Naive thymus-derived CD4-positive, alpha-beta T cell (primary cell): ENCODE measurements at regions of chr20 and their contacts with region 1.

Region 1: GRCh38 chr20:59207742-59208357 is 44.2 kb downstream of the ZNF831 start:
- DNase-seq: peak; percentile 62 to 82 (median 78)
- ATAC-seq: peak; percentile 98
- H3K4me3 ChIP-seq: no peak overlapping the region
- H3K4me3 Mint-ChIP-seq: peak overlapping the region in 3 of 10 donors; percentile 8 to 35 (median 12)
- H3K27ac ChIP-seq: no peak overlapping the region
- H3K27ac Mint-ChIP-seq: peak overlapping the region in 8 of 9 donors; percentile 63 to 93 (median 84)
- H3K4me1 ChIP-seq: peaks cover 7 to 18% of the 10 kb centered on the region in 2 donors
- H3K4me1 Mint-ChIP-seq: peaks cover 13 to 47% (median 42%) of the 10 kb centered on the region in 7 donors
- H3K27me3 ChIP-seq: no peaks in the 10 kb centered on the region
- H3K27me3 Mint-ChIP-seq: no peaks in the 10 kb centered on the region

Region 2: DNA sequence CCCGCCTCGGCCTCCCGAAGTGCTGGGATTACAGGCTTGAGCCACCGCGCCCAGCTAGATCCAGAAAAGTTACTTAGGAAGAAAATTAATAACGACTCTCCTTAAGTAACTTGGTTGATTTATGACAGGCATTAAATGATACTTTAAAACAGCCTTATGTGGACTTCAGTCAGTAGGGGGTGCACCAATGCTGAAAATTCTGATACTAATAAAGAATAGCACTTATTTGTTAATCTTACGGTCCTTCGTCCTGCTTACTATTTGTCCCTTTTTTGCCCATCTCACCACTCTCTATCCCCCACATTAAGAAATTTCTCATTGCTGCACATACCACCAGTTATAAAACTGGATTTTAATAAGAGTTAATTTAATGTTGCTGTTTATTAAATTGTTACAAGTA is 152.6 kb before region 1 on chr20:
- CTCF ChIA-PET with region 1: interaction called, 5 read pairs
- POLR2A ChIA-PET with region 1: no interaction called
- intact Hi-C with region 1: loop called in 1 of 2 experiments (anchors 1 kb)
- DNase-seq: peak in 4 of 9 donors; percentile 5 to 25 (median 14)
- ATAC-seq: no peak
- H3K4me3 ChIP-seq: no peak overlapping the region
- H3K4me3 Mint-ChIP-seq: no peak overlapping the region
- H3K27ac ChIP-seq: no peak overlapping the region
- H3K27ac Mint-ChIP-seq: no peak overlapping the region
- H3K4me1 ChIP-seq: no peaks in the 10 kb centered on the region
- H3K4me1 Mint-ChIP-seq: no peaks in the 10 kb centered on the region
- H3K27me3 ChIP-seq: peaks cover 4 to 5% of the 10 kb centered on the region in 2 donors
- H3K27me3 Mint-ChIP-seq: peaks cover 10 to 59% (median 15%) of the 10 kb centered on the region in 5 donors

Region 3: DNA sequence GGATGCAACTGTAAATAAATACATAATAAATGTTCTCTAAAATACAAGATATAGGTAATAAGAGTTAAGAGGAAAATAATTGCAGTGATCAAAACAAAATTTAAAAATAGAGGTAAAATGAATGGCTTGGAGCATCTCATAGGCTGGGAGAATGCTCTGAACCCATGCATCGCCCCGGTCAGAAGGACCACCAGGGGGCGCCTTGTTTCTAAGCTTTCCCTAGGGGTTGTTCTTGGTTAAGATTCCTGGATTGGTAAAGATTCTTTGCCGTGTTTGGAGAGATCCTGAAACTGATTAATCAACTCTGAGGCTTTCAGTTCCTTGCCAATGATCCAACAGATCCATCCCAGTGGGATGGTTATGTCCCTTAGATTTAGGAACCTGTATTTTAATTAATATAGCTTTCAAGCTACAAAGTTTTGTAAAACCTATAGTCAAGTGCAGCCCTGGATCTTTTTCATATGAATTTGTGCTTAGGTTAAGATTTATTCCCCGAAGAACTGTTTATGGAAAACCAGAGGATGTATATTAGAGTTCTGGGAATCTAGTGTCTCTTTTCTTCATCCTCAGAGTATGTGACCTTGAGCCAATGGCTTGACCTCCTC is 119.9 kb before region 1 on chr20:
- CTCF ChIA-PET with region 1: interaction called, 97 read pairs
- POLR2A ChIA-PET with region 1: interaction called, 13 read pairs
- intact Hi-C with region 1: loop called (anchors 1 kb)
- DNase-seq: peak; percentile 67 to 85 (median 78)
- ATAC-seq: peak; percentile 92
- H3K4me3 ChIP-seq: no peak overlapping the region
- H3K4me3 Mint-ChIP-seq: no peak overlapping the region
- H3K27ac ChIP-seq: no peak overlapping the region
- H3K27ac Mint-ChIP-seq: peak overlapping the region in 4 of 9 donors; percentile 10 to 58 (median 40)
- H3K4me1 ChIP-seq: peaks cover 0 to 5% of the 10 kb centered on the region in 2 donors
- H3K4me1 Mint-ChIP-seq: peaks cover 0 to 7% (median 5%) of the 10 kb centered on the region in 7 donors
- H3K27me3 ChIP-seq: no peaks in the 10 kb centered on the region
- H3K27me3 Mint-ChIP-seq: peaks cover 0 to 32% (median 0%) of the 10 kb centered on the region in 5 donors

Region 4: DNA sequence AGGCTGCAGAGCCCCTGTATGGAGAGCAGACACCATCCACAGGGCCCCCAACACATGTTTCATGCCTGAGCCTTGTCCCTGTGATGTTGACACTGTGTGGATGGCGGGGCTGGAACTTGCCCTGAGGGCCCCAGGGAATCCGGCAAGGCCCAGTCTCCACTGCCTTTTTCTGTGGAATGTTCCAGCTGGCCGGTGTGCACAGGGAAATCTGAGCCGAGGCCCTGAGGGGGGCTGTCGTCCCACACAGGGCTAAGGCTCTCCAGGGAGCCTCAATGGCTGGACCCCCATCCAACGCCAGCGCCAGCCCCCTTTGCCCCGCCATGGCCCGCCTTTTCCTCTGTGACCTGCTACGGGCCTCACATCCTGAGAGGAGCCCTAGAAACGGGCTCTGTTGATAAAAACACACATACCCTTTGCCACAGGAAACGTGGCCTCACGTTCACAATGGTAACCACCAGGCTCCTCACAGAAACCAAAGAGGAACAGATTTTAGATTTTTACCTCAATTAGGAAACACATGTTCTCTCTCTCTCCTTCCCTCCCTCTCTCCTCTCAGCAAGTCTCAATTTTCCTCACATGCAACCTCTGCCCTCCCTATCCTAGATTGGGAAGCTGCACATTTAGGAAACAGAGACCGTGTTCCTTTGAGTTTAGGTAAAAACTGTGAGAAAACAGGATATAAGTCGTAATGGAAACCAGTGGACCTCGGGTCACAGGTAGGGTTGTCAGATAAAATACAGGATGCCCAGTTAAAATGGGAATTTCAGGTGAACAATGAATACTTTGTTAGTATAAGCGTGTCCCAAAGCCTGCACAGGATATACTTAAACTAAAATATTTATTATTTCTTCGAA is 58.0 kb before region 1 on chr20:
- CTCF ChIA-PET with region 1: interaction called, 26 read pairs
- POLR2A ChIA-PET with region 1: interaction called, 13 read pairs
- intact Hi-C with region 1: loop called (anchors 1 to 5 kb)
- DNase-seq: peak; percentile 51 to 93 (median 88)
- ATAC-seq: peak; percentile 91
- H3K4me3 ChIP-seq: peak overlapping the region; percentile 33
- H3K4me3 Mint-ChIP-seq: peak overlapping the region; percentile 56 to 91 (median 82)
- H3K27ac ChIP-seq: peak overlapping the region; percentile 98
- H3K27ac Mint-ChIP-seq: peak overlapping the region; percentile 96 to 100 (median 99)
- H3K4me1 ChIP-seq: peaks cover 83% of the 10 kb centered on the region in 2 donors
- H3K4me1 Mint-ChIP-seq: peaks cover 53 to 98% (median 94%) of the 10 kb centered on the region in 7 donors
- H3K27me3 ChIP-seq: no peaks in the 10 kb centered on the region
- H3K27me3 Mint-ChIP-seq: no peaks in the 10 kb centered on the region

Region 5: GRCh38 chr20:59165891-59166709 is 41.8 kb before region 1 on chr20:
- CTCF ChIA-PET with region 1: interaction called, 17 read pairs
- POLR2A ChIA-PET with region 1: interaction called, 9 read pairs
- intact Hi-C with region 1: loop called (anchors 2 to 5 kb)
- DNase-seq: peak in 5 of 9 donors; percentile 43 to 65 (median 50)
- ATAC-seq: peak; percentile 72
- H3K4me3 ChIP-seq: peak overlapping the region; percentile 48
- H3K4me3 Mint-ChIP-seq: peak overlapping the region; percentile 76 to 93 (median 87)
- H3K27ac ChIP-seq: peak overlapping the region; percentile 93
- H3K27ac Mint-ChIP-seq: peak overlapping the region; percentile 95 to 99 (median 98)
- H3K4me1 ChIP-seq: peaks cover 70 to 72% of the 10 kb centered on the region in 2 donors
- H3K4me1 Mint-ChIP-seq: peaks cover 68 to 97% (median 93%) of the 10 kb centered on the region in 7 donors
- H3K27me3 ChIP-seq: no peaks in the 10 kb centered on the region
- H3K27me3 Mint-ChIP-seq: no peaks in the 10 kb centered on the region

Region 6: DNA sequence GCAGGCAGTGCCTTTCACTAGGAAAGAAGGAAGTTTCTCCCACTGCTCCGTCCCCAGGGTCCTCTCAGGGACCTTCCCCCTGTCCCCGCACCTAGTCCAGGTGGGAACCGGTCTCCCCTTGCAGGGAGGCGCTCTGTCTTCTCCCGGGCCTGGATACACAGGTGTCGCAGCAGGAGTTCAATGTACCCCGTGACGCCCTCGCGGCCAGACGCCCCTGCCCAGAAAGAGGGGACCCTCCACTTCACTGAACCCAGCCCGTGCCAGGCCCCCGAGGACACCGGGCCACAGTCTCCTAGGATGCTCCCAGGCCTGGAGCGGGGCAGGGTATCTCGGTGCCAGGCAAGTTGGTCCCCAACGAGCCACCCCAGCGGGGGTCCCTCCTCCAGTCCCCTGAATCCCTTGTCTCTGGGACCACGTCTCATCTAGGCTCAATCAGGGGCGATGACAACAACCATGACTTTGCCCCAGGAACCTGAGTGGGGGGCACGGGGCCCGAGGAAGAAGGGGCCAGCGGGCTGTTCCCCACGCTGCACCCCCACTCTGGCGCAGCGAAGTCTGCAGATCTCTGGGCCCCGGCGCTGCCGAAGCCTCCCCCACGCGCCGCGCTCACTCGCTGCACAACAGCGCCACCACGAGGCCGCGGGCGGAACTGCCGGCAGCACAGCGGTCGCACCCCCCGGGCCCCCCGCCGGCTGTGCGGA is 195.6 kb after region 1 on chr20:
- CTCF ChIA-PET with region 1: interaction called, 4 read pairs
- POLR2A ChIA-PET with region 1: interaction called, 3 read pairs
- intact Hi-C with region 1: loop called in 1 of 2 experiments (anchors 2 kb)
- DNase-seq: peak; percentile 65 to 91 (median 77)
- ATAC-seq: peak; percentile 93
- H3K4me3 ChIP-seq: peak overlapping the region; percentile 53
- H3K4me3 Mint-ChIP-seq: peak overlapping the region in 1 of 10 donors; percentile 59
- H3K27ac ChIP-seq: peak overlapping the region; percentile 41
- H3K27ac Mint-ChIP-seq: peak overlapping the region in 4 of 9 donors; percentile 49 to 94 (median 85)
- H3K4me1 ChIP-seq: peaks cover 12 to 35% of the 10 kb centered on the region in 2 donors
- H3K4me1 Mint-ChIP-seq: peaks cover 0 to 4% (median 2%) of the 10 kb centered on the region in 7 donors
- H3K27me3 ChIP-seq: peaks cover 0 to 7% of the 10 kb centered on the region in 2 donors
- H3K27me3 Mint-ChIP-seq: peaks cover 0 to 18% (median 3%) of the 10 kb centered on the region in 5 donors